ENCODE measurements at regions of chr3 and their contacts with region 1.

Region 1: GRCh38 chr3:9715764-9716437 is 12.3 kb downstream of the CPNE9 start:
- DNase-seq: peak; percentile 86 to 96 (median 92)
- H3K4me3 ChIP-seq: peak overlapping the region in 1 of 3 experiments; percentile 49
- H3K4me3 Mint-ChIP-seq: peak overlapping the region in 1 of 2 donors; percentile 13
- H3K27ac ChIP-seq: peak overlapping the region; percentile 51 to 77
- H3K27ac Mint-ChIP-seq: peak overlapping the region; percentile 81 to 93 (median 91)
- H3K4me1 ChIP-seq: peaks cover 29 to 38% of the 10 kb centered on the region in 2 donors
- H3K4me1 Mint-ChIP-seq: peaks cover 37% of the 10 kb centered on the region
- H3K27me3 ChIP-seq: no peaks in the 10 kb centered on the region
- H3K27me3 Mint-ChIP-seq: peaks cover 0 to 2% (median 0%) of the 10 kb centered on the region in 3 donors
- CTCF ChIP-seq: peak; percentile 88

Region 2: GRCh38 chr3:9725775-9726515 is 10.0 kb after region 1 on chr3:
- intact Hi-C with region 1: loop called in 1 of 2 experiments (anchors 1 kb)
- DNase-seq: no peak
- H3K4me3 ChIP-seq: no peak overlapping the region
- H3K4me3 Mint-ChIP-seq: no peak overlapping the region
- H3K27ac ChIP-seq: no peak overlapping the region
- H3K27ac Mint-ChIP-seq: no peak overlapping the region
- H3K4me1 ChIP-seq: peaks cover 22 to 32% of the 10 kb centered on the region in 2 donors
- H3K4me1 Mint-ChIP-seq: peaks cover 32% of the 10 kb centered on the region
- H3K27me3 ChIP-seq: no peaks in the 10 kb centered on the region
- H3K27me3 Mint-ChIP-seq: peaks cover 0 to 1% (median 0%) of the 10 kb centered on the region in 3 donors
- CTCF ChIP-seq: no peak

Measured in CD14-positive monocyte (primary cell).